PC-9 (cell line): ENCODE measurements at regions of chr9 and their contacts with region 1.

Region 1: GRCh38 chr9:136578915-136579649 is 33.2 kb upstream of the NOTCH1 start:
- DNase-seq: peak in 1 of 2 experiments; percentile 34
- H3K4me3 ChIP-seq: no peak overlapping the region; the same call in 1 of the 2 replicates
- H3K27ac ChIP-seq: peak overlapping the region; percentile 70; the same call in 1 of the 2 replicates
- H3K4me1 ChIP-seq: peaks cover 26% of the 10 kb centered on the region
- H3K27me3 ChIP-seq: no peaks in the 10 kb centered on the region
- CTCF ChIP-seq: no peak

Region 2: DNA sequence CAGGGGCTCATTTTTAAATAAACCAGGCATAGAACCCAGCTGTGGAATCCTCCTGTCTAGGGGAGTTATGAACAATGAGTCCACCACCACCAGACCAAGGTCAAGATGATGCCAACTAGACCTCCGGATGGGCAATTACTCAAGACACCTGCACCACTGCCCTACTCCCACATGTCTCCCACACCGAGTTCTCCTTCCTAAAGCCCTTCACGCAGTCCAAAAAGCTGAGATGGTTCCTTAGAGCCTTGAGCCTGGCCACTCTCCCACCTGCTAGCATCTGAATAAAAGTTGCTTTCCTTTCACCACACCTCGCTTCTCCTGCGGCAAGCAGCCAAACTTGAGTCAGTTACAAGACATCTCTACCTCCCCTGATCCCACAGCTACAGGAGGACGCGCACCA is 1114.9 kb before region 1 on chr9:
- CTCF ChIA-PET with region 1: no interaction called
- POLR2A ChIA-PET with region 1: interaction called, 15 read pairs
- intact Hi-C with region 1: no loop called
- DNase-seq: no peak
- H3K4me3 ChIP-seq: no peak overlapping the region
- H3K27ac ChIP-seq: peak overlapping the region; percentile 43; the same call in 1 of the 2 replicates
- H3K4me1 ChIP-seq: peaks cover 38% of the 10 kb centered on the region
- H3K27me3 ChIP-seq: no peaks in the 10 kb centered on the region
- CTCF ChIP-seq: no peak

Region 3: GRCh38 chr9:136512651-136513071 is 66.4 kb before region 1 on chr9:
- CTCF ChIA-PET with region 1: no interaction called
- POLR2A ChIA-PET with region 1: no interaction called
- intact Hi-C with region 1: no loop called
- DNase-seq: no peak
- H3K4me3 ChIP-seq: no peak overlapping the region
- H3K27ac ChIP-seq: no peak overlapping the region
- H3K4me1 ChIP-seq: no peaks in the 10 kb centered on the region
- H3K27me3 ChIP-seq: no peaks in the 10 kb centered on the region
- CTCF ChIP-seq: no peak